Activated CD4-positive, alpha-beta T cell treated with anti-CD3 and anti-CD28 coated beads for 36 hours (primary cell): ENCODE measurements at regions of chr14 and their contacts with region 1.

Region 1: GRCh38 chr14:50778721-50779483 is 52.1 kb downstream of the NIN start:
- DNase-seq: no peak
- ATAC-seq: no peak
- H3K4me3 Mint-ChIP-seq: no peak overlapping the region
- H3K27ac Mint-ChIP-seq: no peak overlapping the region
- H3K4me1 Mint-ChIP-seq: peaks cover 36% of the 10 kb centered on the region
- H3K27me3 Mint-ChIP-seq: no peaks in the 10 kb centered on the region

Region 2: GRCh38 chr14:49677643-49678042 is 1101.3 kb before region 1 on chr14:
- CTCF ChIA-PET with region 1: no interaction called
- POLR2A ChIA-PET with region 1: no interaction called
- intact Hi-C with region 1: no loop called
- DNase-seq: no peak
- ATAC-seq: peak; percentile 33
- H3K4me3 Mint-ChIP-seq: no peak overlapping the region
- H3K27ac Mint-ChIP-seq: no peak overlapping the region
- H3K4me1 Mint-ChIP-seq: peaks cover 7% of the 10 kb centered on the region
- H3K27me3 Mint-ChIP-seq: no peaks in the 10 kb centered on the region

Region 3: GRCh38 chr14:50542941-50543418 is 235.9 kb before region 1 on chr14:
- CTCF ChIA-PET with region 1: interaction called, 43 read pairs
- POLR2A ChIA-PET with region 1: no interaction called
- intact Hi-C with region 1: loop called (anchors 1 kb)
- DNase-seq: peak; percentile 58
- ATAC-seq: peak; percentile 98
- H3K4me3 Mint-ChIP-seq: no peak overlapping the region
- H3K27ac Mint-ChIP-seq: peak overlapping the region; percentile 72
- H3K4me1 Mint-ChIP-seq: peaks cover 16% of the 10 kb centered on the region
- H3K27me3 Mint-ChIP-seq: no peaks in the 10 kb centered on the region

Region 4: DNA sequence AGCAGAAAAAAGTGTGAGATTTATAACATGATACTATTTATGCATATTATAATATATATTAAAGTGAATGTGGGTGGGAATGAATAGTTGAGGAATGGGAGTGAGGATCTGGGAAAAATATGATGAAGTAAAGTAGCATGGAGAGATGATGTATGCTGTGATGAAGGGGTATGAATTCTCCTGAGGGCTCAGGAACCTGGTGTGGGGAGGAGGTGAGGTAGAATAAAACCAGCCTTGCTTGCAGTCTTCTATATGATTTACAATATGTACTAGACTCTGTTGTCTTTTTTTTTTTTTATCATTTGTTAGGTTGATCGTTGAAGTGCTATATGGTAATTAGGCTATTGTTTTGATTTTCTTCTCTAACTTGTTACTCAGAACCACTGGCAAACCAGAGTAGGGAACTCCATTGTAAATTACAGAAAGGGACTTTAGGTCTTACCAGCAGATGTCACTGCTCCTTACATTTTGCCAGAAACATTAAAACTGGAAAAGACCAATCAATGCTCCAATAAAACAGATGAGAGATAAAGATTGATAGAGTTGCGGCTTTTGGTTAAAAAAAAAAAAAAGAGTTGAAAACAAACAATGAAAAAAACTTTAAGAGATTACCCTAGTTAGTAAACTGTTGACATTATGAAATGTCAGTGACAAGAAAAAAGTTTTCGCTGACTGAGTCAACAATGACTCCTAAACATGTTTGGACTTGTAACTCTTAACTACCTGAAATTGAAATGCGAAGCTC is 179.0 kb before region 1 on chr14:
- CTCF ChIA-PET with region 1: interaction called, 26 read pairs
- POLR2A ChIA-PET with region 1: no interaction called
- intact Hi-C with region 1: loop called (anchors 1 kb)
- DNase-seq: no peak
- ATAC-seq: peak; percentile 42
- H3K4me3 Mint-ChIP-seq: no peak overlapping the region
- H3K27ac Mint-ChIP-seq: no peak overlapping the region
- H3K4me1 Mint-ChIP-seq: no peaks in the 10 kb centered on the region
- H3K27me3 Mint-ChIP-seq: no peaks in the 10 kb centered on the region

Region 5: GRCh38 chr14:50619556-50620141 is 159.3 kb before region 1 on chr14:
- CTCF ChIA-PET with region 1: interaction called, 23 read pairs
- POLR2A ChIA-PET with region 1: no interaction called
- intact Hi-C with region 1: loop called (anchors 1 kb)
- DNase-seq: no peak
- ATAC-seq: peak; percentile 66
- H3K4me3 Mint-ChIP-seq: no peak overlapping the region
- H3K27ac Mint-ChIP-seq: no peak overlapping the region
- H3K4me1 Mint-ChIP-seq: no peaks in the 10 kb centered on the region
- H3K27me3 Mint-ChIP-seq: no peaks in the 10 kb centered on the region

Region 6: DNA sequence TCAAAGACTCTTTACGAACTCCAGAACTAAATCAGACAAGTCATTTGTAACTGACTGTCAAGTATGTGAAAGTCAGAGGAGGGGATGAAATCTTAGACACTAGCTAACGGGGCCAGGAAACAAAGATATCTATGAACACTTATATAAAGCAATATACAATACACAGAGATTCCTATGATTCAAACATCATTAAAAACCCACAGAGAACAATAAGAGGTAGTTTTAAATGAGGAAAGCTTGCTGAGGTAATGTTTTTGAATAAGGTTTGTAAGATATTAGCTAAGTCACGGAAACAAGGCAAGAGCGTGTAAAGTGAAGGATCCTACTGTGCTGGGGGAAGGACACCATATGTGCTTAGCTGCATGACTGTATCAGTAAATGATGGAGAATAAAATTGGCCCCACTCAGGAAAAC is 147.5 kb before region 1 on chr14:
- CTCF ChIA-PET with region 1: interaction called, 13 read pairs
- POLR2A ChIA-PET with region 1: no interaction called
- intact Hi-C with region 1: no loop called
- DNase-seq: no peak
- ATAC-seq: no peak
- H3K4me3 Mint-ChIP-seq: no peak overlapping the region
- H3K27ac Mint-ChIP-seq: no peak overlapping the region
- H3K4me1 Mint-ChIP-seq: no peaks in the 10 kb centered on the region
- H3K27me3 Mint-ChIP-seq: no peaks in the 10 kb centered on the region

Region 7: DNA sequence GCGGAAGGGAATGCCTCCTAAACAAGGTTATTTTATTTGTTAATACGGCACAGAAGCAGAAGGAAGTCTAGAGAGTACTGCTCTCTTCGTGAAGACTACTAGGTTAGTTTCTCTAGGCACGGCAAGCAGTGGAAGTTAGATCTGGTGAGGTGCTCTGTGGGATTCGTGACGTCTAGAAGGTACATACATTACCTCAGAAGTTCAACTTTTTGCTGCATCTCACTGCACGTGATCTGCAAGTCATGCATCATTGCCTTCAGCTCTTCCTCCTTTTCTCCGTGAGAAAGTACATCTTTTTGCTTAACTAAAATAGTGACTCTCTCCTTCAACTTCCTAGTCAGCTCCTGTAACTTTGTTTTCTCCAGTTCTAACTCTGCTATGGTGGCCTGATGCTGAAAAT is 22.6 kb before region 1 on chr14:
- CTCF ChIA-PET with region 1: interaction called, 168 read pairs
- POLR2A ChIA-PET with region 1: no interaction called
- intact Hi-C with region 1: no loop called
- DNase-seq: no peak
- ATAC-seq: no peak
- H3K4me3 Mint-ChIP-seq: no peak overlapping the region
- H3K27ac Mint-ChIP-seq: no peak overlapping the region
- H3K4me1 Mint-ChIP-seq: peaks cover 9% of the 10 kb centered on the region
- H3K27me3 Mint-ChIP-seq: no peaks in the 10 kb centered on the region